ENCODE measurements at regions of chr10 and their contacts with region 1.

Region 1: GRCh38 chr10:60114765-60115586 is 208.6 kb upstream of the CCDC6 start:
- DNase-seq: peak; percentile 56
- H3K4me3 ChIP-seq: no peak overlapping the region
- H3K27ac ChIP-seq: no peak overlapping the region
- H3K4me1 ChIP-seq: peaks cover 3% of the 10 kb centered on the region
- CTCF ChIP-seq: peak; percentile 79

Region 2: GRCh38 chr10:60434418-60435046 is 319.6 kb after region 1 on chr10:
- CTCF ChIA-PET with region 1: no interaction called
- POLR2A ChIA-PET with region 1: interaction called, 3 read pairs
- intact Hi-C with region 1: loop called (anchors 5 kb)
- DNase-seq: peak; percentile 49
- H3K4me3 ChIP-seq: no peak overlapping the region
- H3K27ac ChIP-seq: no peak overlapping the region
- H3K4me1 ChIP-seq: no peaks in the 10 kb centered on the region
- CTCF ChIP-seq: peak; percentile 90

Measured in OCI-LY7 (cell line).